ENCODE measurements at regions of chr6 and their contacts with region 1.

Region 1: GRCh38 chr6:13908955-13909381 is 15.8 kb upstream of the RNF182 start:
- DNase-seq: peak; percentile 64
- CTCF ChIP-seq: peak; percentile 62

Region 2: GRCh38 chr6:13733178-13733887 is 175.6 kb before region 1 on chr6:
- CTCF ChIA-PET with region 1: no interaction called
- POLR2A ChIA-PET with region 1: no interaction called
- DNase-seq: no peak
- CTCF ChIP-seq: no peak

Region 3: GRCh38 chr6:13873285-13874190 is 35.4 kb before region 1 on chr6:
- CTCF ChIA-PET with region 1: interaction called, 13 read pairs
- POLR2A ChIA-PET with region 1: no interaction called
- DNase-seq: peak; percentile 89
- CTCF ChIP-seq: peak; percentile 94

Region 4: DNA sequence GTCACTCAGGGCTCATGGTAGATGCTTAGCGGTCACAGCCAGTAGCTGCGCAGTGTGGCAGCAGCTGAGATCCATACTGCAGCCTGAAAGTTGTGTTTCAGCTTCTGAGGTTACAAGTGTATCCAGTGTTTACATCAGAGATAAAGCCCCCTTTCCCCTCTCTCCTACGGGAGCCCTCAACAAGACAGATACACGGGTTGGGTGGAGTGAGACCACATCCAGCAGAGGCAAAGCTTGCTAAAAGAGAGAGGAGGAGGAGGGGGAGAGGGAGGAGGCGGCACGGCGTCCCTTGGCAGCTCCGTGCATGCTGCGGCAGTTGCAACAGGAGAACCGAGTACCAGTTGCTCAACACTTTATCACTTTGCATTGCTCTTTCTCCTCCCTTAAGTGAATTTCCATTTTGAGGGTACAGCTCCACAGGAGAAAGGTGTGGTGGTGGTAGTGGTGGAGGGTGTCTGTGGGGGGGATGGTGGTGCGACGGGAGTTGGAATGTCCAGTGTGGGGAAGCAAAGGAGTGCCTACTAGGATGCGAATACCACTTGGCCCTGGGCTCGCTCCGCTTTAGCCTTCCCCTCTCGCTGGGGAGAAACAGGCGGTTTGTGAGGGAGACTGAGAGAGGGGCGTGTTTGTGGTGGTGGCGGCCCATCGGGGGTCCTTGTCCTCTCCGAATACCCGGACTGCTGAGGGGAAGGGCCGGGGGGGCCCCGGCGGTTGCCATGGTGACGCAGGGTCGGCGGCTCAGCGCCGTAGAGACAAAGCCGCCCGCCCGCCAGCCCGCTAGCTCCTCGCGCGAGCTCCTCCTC is 15.4 kb after region 1 on chr6:
- CTCF ChIA-PET with region 1: interaction called, 13 read pairs
- POLR2A ChIA-PET with region 1: no interaction called
- DNase-seq: peak; percentile 15
- CTCF ChIP-seq: no peak

Region 5: GRCh38 chr6:14046476-14047068 is 137.6 kb after region 1 on chr6:
- CTCF ChIA-PET with region 1: interaction called, 49 read pairs
- POLR2A ChIA-PET with region 1: no interaction called
- DNase-seq: peak; percentile 72
- CTCF ChIP-seq: peak; percentile 67

Region 6: GRCh38 chr6:14144678-14145113 is 235.7 kb after region 1 on chr6:
- CTCF ChIA-PET with region 1: interaction called, 64 read pairs
- POLR2A ChIA-PET with region 1: no interaction called
- DNase-seq: peak; percentile 87
- CTCF ChIP-seq: peak; percentile 92